ENCODE measurements at regions of chr15 and their contacts with region 1.

Region 1: DNA sequence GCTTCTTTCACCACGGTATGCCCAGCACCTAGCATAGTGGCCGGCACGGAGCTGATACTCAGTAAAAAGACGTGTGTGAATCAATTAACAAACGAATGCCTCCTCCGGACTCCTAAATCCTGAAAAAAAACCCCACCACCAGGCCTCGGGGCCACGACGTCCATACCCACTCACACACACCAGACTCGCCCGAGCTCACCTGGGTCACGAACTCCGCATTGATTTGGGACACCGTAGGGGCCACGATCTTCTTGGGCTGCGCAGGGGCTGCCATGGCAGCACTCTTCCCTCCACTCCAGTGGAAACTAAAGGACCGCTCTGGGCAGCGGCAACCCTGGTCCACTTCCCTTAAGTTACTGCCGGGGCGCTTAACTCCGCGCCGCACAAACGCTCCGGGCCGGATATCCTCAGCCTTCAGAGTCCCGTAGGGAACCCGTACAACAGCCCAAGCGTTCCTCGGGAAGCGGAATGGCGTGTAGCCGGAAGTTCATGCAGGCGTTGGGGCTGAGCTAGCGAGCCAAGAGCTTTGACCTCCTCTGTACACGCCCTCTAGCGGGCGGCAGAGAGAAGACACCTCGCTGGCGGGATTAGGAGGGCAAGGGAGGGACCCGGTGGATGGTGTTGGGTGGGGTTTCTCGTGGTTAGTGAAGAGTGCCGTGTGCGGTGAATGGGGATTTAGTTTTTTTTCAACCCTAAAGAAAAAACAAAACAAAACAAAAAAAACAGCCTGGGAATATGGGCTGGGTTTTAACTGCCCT is at the start of gene AQR:
- DNase-seq: peak; percentile 88
- H3K4me3 ChIP-seq: peak within 1 kb of the TSS; percentile 93
- CTCF ChIP-seq: peak; percentile 95

Region 2: DNA sequence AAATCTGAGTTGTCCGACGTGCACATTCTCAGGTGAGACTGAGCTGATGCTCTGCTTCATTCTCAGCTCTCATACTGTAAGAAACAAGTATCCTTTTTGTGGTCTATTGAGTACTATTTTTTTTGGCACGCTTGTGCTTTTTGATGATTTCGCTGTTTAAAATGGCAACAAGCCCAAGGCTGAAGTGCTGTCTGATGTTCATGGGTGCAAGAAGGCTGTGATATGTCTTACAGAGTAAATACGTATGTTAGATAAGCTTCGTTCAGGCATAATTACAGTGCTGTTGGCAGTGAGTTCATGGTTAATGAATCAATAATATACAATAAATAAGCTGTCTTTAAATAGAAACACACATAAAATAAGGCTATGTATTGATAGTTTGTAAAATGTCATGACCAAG is 27.2 kb before region 1 on chr15:
- CTCF ChIA-PET with region 1: interaction called, 11 read pairs
- POLR2A ChIA-PET with region 1: interaction called, 13 read pairs
- DNase-seq: peak; percentile 16
- H3K4me3 ChIP-seq: no peak overlapping the region
- CTCF ChIP-seq: no peak

Region 3: DNA sequence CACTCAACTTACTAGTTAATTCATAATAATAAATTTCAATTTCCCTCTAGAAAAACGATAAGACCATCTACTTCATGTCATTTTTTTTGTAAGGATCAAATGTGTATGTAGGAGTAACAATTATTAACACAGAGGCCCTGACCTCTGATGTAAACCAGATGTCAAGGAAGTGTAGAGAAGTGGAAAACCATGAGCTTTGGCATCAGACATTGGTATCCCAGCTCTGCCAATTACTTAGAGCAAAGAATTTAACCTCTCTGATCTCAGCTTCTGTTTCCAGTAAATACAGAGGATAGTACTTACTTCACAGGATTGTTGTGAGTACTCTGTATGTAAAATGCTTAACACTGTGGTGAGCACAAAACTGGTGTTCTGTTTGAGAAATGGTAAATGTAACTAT is 17.5 kb before region 1 on chr15:
- CTCF ChIA-PET with region 1: interaction called, 11 read pairs
- POLR2A ChIA-PET with region 1: no interaction called
- DNase-seq: peak; percentile 26
- H3K4me3 ChIP-seq: no peak overlapping the region
- CTCF ChIP-seq: no peak

Region 4: GRCh38 chr15:34987985-34988873 is 18.7 kb after region 1 on chr15 and contains the start of gene ZNF770:
- CTCF ChIA-PET with region 1: interaction called, 51 read pairs
- POLR2A ChIA-PET with region 1: interaction called, 25 read pairs
- DNase-seq: no peak
- H3K4me3 ChIP-seq: peak within 1 kb of the TSS; percentile 98
- CTCF ChIP-seq: no peak